ENCODE measurements at regions of chr15 and their contacts with region 1.

Region 1: GRCh38 chr15:90071208-90071807 is 31.0 kb downstream of the IDH2 start:
- DNase-seq: peak; percentile 85 to 95 (median 88)
- ATAC-seq: peak; percentile 75 to 78
- H3K4me3 ChIP-seq: no peak overlapping the region
- H3K27ac ChIP-seq: no peak overlapping the region
- H3K4me1 ChIP-seq: no peaks in the 10 kb centered on the region
- H3K27me3 ChIP-seq: no peaks in the 10 kb centered on the region

Region 2: DNA sequence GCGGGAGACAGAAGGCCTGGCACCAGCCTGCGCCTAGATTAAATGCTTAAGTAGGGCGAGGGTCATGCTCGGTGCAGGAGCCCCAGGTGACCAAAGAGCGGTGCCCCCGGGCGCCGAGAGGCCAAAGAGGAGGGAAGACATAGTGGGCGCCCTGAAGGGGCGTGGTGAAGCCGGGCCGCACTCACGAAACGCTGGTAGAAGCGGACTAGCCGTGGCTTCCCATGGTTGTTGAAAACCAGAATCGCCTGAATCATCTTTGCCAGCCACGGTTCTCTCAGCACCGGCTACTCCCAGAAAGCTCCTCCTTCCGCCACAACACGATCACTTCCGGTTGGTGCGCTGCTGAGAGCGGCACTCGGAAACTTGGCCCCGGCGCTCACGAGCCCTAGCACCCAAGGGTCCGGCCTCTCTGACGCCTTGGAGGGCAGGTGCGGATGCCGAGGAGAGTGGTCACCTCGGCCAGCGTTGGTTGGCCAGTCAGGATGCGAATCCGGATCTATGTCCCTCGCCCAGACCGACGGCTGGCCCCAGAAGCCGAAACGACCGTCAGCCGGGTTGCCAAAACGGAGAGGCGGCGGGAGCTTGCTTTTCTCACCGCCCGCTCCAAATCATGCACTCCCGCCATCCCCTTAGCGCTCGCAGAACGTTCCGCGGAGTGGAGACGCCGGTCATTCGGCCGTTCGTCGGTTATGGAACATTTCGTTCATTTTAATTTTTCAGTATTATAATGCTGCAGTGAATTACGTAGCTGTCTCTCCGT is 177.4 kb before region 1 on chr15 and contains the start of gene AP3S2:
- intact Hi-C with region 1: loop called in 1 of 4 experiments (anchors 5 kb)
- DNase-seq: peak; percentile 91 to 95 (median 95)
- ATAC-seq: peak; percentile 98 to 99
- H3K4me3 ChIP-seq: peak within 1 kb of the TSS; percentile 84
- H3K27ac ChIP-seq: peak within 1 kb of the TSS; percentile 88
- H3K4me1 ChIP-seq: peaks cover 2% of the 10 kb centered on the region
- H3K27me3 ChIP-seq: no peaks in the 10 kb centered on the region
- total RNA-seq, gene AP3S2: 38.5 to 42.6 (median 40.4) TPM

Region 3: GRCh38 chr15:89907289-89907688 is 164.0 kb before region 1 on chr15:
- intact Hi-C with region 1: loop called in 2 of 4 experiments (anchors 5 to 10 kb)
- DNase-seq: no peak
- ATAC-seq: no peak
- H3K4me3 ChIP-seq: no peak overlapping the region
- H3K27ac ChIP-seq: no peak overlapping the region
- H3K4me1 ChIP-seq: no peaks in the 10 kb centered on the region
- H3K27me3 ChIP-seq: no peaks in the 10 kb centered on the region

Region 4: DNA sequence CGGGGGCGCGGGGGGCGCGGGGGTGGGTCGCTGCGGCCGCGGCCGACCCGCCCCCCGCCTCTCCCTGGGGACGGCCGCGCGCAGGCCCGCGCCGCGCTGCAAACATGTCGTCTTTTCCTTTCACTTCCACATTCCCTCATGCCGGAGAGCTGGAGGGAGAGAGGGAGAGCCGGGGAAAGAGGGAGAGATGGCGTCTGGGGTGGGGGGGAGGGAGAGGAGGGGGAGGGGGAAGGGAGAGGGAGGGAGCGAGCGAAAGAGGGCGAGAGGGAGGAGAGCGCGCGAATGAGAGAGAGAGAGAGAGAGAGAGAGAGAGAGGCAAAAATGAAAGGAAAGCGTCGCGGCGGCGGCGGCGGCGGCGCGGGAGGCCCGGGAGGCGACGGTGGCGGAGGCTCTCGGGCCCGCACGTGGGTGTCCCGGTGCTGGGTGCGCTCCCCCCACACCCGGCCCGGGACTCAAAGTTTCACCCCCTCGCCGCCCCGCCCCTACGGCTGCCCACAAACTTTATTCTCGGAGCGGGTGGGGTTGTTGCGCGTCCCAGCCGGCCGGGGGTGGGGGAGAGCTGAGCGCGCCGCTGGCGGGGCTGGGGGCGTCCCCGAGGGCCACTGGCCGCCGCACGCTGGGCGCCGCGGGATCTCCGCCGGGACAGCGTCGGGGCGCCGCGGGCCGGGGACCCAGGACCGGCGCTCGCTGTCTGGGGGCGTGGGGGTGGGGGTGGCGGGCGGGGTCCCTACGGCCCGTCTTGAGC is 69.5 kb before region 1 on chr15:
- intact Hi-C with region 1: loop called (anchors 5 to 10 kb)
- DNase-seq: peak; percentile 67 to 87 (median 87)
- ATAC-seq: peak; percentile 35 to 45
- H3K4me3 ChIP-seq: peak overlapping the region; percentile 97
- H3K27ac ChIP-seq: peak overlapping the region; percentile 82
- H3K4me1 ChIP-seq: peaks cover 15% of the 10 kb centered on the region
- H3K27me3 ChIP-seq: no peaks in the 10 kb centered on the region

Region 5: DNA sequence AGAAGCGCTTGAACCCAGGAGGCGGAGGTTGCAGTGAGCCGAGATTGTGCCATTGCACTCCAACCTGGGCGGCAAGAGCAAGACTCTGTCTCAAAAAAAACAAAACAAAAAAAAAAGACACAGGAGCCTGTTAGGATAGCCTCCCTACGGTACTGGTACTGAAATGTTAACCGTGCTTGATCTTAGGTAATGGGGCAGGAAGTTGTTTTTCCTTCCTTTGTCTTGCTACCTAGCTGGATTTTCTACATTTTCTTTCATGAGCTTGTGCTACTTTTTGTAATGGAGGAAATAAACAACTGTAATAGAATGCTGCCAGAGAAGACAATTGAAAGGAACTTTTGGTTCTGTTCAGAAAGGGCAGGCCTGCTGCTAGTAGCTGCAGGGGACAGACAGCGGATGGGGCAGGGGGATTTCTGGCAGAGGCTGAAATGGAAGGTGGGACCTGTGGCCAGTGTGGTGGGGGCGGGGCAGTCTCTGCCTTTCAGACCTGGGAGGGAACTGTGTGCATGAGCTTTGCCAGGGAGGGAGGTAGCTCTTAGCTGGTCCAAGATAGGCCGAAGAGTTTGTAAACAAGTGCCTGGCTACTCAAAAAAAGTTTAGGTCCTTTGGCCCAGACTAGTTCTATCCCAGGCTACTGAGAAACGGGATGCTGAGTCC is 80.8 kb after region 1 on chr15:
- intact Hi-C with region 1: no loop called
- DNase-seq: no peak
- ATAC-seq: peak in 1 of 2 donors; percentile 38
- H3K4me3 ChIP-seq: no peak overlapping the region
- H3K27ac ChIP-seq: no peak overlapping the region
- H3K4me1 ChIP-seq: no peaks in the 10 kb centered on the region
- H3K27me3 ChIP-seq: no peaks in the 10 kb centered on the region